ENCODE measurements at regions of chr1 and their contacts with region 1.

Region 1: GRCh38 chr1:211654838-211655787 is 20.3 kb downstream of the NEK2 start:
- DNase-seq: peak; percentile 76 to 98 (median 90)

Region 2: DNA sequence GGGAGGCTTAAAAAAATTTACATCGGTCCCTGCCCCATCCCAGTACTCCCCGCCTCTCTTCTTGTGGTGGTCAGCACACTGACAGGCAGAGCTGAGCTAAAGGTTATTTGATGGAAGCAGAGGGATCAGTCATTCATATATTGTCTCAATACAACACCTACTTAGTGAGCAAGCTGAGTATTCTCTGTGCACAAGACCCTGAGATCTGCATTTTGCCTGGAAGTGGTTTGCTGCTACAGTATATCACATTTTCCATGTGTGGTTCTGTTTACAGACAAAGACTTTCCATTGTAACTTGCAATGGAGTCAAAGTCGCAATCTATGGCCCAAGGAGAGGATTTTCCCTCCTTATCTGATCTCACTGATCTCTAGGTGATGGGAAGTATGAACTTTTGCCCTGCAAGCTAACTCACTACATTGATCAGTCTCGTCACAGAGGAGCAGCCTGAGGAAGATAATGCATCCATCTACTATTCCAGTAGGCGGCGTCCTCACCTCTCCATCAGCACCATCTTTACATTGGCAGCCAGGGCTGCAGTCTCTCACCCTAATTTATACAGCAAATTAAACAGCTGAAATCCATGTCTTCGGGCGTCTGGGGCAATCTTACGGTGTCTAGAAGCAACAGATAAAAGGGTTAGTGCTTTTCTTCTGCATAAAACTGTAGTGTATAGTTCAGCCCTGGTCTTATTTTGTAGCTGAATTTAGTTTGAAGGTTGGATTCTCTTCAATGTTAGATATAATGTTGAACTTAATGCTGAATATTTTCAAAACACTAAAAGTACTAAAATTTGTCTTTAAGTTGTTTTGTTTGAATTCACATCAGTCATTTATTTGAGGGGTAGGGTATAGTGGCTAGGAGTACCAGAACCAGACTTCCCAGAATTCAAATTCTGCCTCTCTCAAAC is 331.7 kb before region 1 on chr1:
- intact Hi-C with region 1: loop called (anchors 5 kb)
- DNase-seq: peak in 4 of 10 donors; percentile 25 to 53 (median 43)

Region 3: DNA sequence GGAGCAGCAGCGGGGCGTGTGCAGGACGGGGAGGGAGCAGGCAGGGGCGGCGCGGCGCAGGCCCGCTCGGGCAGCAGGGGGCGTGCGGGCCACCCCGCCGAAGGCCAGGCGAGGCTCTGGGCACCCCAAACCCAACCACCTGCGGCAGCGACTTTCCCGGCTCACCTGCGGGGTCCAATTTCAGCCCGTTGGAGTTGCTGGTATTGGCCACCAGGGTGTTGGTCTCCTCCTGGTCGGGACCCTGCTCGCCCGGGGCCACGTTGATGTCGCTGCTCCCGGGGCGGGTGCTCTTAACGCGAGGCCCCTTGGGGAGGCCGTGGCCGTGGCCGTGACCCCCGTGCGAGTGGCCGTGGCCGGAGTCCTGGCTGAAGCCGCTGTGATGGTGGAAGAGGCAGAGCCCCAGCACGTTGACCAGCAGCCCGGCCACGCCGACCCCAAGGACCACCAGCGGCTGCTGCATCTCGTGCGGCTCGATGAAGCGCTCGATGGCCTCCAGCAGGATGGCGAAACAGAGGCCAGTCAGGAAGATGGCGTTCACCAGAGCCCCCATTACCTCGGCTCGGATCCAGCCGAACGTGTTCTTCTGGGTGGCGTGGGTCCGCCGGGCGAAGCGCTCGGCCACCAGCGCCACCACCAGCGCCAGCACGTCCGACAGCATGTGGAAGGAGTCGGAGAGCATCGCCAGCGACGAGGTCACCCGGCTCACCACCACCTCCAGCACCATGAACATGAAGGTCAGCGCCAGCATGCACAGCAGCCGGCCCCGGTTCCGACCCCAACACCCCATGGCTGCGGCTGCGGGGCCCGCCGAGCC is 77.1 kb before region 1 on chr1:
- intact Hi-C with region 1: loop called (anchors 1 kb)
- DNase-seq: peak; percentile 23 to 95 (median 60)

Region 4: DNA sequence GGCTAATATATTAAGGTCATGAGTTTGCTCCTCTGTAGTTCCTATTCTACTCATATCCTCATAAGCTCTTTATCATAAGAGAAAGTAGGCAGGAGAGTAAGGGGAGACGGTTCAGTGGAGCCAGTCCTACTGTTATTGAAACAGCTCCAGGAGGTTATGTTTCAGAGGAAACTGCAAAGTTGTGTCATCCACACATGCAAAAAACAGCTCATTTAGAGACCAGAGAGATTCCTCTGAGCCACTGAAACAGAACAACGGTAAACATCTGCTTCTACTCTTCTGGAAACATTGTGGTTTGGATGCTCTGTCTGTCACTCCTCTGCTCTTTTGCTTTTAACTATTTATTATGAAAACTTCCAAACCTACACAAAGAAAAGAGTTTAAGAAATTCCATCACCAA is 563.8 kb after region 1 on chr1:
- intact Hi-C with region 1: no loop called
- DNase-seq: no peak